Cardiac septum (tissue), 1 donor: ENCODE measurements at regions of chr18 and their contacts with region 1.

Region 1: DNA sequence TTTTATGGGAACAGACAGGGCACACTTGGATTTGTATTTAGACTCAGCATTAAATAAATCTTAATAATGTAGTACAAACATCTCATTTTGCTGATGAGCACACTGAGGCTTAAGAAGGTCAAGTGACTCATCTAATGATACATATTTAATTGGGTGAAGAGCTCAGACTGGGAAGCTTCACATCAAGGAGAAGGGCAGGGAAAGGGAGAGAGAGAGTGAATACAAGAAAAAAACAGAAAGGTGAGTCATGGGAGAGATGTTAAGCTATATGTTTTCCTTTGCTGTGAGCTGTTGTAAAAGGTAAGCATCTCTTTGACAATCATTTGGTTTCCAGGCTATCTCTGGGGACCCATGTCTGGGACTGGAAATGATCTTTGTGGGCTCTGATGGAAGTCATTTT is 277.8 kb downstream of the SETBP1 start:
- DNase-seq: no peak

Region 2: GRCh38 chr18:45066886-45067285 is 108.4 kb after region 1 on chr18:
- intact Hi-C with region 1: loop called (anchors 2 kb)
- DNase-seq: no peak

Region 3: GRCh38 chr18:45202061-45202460 is 243.6 kb after region 1 on chr18:
- intact Hi-C with region 1: no loop called
- DNase-seq: no peak

Region 4: DNA sequence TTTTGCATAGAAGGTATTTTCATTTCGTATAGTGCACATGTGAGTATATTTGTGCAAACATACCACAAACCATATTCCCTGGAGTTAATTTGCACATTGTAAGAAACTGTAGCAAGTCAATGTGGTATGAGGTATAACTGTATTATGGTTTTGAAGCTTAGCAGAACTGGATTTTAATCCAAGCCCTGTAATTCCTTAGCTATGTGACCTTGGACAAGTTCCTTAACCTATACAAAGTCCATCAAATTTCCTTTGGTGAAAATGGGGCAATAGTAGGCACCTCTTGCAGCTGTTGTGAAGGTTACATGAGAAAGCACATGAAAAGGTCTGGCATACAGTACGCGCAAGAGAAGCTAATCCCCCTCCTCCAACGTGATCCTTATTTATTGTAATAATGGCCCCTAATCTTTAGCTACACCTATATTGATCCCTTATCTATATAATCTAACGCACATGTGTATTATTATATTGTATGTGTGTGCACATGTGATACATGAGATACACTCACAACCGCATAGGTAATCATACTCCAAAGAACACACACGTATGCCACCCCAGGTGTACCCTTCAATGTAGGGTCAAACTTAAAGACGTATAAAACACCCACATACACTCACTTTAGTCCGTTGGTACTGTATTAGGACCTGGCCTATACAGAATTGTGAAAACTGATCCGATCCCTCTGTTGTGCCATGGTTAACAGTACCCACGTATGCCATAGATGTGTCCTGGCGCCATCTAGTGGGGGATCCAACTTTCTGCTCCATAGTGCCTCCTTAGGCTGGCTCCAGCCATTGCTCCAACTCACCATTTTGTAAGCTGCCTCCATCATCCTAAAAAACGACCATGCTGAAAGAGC is 254.0 kb after region 1 on chr18:
- intact Hi-C with region 1: loop called (anchors 5 kb)
- DNase-seq: peak; percentile 86